ENCODE measurements at regions of chr10 and their contacts with region 1.

Region 1: GRCh38 chr10:16828114-16828568 is 10.9 kb upstream of the RSU1 start:
- DNase-seq: peak; percentile 80
- ATAC-seq: peak; percentile 88
- H3K4me3 Mint-ChIP-seq: no peak overlapping the region
- H3K27ac Mint-ChIP-seq: no peak overlapping the region
- H3K4me1 Mint-ChIP-seq: peaks cover 9% of the 10 kb centered on the region
- H3K27me3 Mint-ChIP-seq: no peaks in the 10 kb centered on the region

Region 2: DNA sequence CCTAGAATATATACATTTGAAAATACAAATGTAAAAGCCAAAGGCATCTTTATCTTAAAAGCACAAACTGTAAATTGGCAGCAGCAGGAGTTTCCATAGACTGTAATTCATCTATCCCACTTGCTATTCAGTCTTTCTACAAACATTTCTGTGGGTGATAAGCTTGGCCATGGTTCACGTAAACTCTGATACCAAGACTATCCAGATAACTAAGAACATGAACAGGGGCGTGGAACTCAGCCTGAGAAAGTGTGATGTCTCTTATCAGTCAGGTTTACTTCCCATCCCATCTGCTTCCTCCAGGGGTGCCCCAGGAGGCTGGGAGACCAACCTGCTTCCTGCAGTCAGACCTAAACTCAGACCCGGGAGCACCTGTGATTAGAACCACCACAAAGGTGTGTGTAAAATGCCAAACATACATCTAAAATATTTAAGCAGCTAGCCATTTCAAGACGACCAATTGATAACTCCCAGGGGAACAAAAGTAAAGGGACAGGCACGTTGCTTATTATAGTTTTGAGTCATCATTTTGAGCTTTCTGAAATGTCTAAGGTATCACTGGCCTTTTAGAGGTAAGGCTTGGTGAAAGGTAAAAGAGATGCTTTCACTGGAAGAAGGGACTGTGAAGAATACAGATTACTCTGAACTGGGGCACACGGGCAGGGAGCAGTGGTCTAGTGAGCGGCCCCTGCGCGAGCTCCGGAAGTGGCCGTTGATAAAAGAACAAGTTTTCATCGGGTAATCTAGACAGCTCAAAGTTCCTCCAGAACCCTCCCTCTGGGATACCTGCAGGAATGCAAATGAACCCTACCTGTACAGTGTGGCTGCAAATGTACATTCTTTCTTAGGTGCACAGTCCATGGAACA is 62.4 kb before region 1 on chr10:
- CTCF ChIA-PET with region 1: no interaction called
- POLR2A ChIA-PET with region 1: no interaction called
- DNase-seq: no peak
- ATAC-seq: no peak
- H3K4me3 Mint-ChIP-seq: no peak overlapping the region
- H3K27ac Mint-ChIP-seq: no peak overlapping the region
- H3K4me1 Mint-ChIP-seq: no peaks in the 10 kb centered on the region
- H3K27me3 Mint-ChIP-seq: no peaks in the 10 kb centered on the region

Region 3: DNA sequence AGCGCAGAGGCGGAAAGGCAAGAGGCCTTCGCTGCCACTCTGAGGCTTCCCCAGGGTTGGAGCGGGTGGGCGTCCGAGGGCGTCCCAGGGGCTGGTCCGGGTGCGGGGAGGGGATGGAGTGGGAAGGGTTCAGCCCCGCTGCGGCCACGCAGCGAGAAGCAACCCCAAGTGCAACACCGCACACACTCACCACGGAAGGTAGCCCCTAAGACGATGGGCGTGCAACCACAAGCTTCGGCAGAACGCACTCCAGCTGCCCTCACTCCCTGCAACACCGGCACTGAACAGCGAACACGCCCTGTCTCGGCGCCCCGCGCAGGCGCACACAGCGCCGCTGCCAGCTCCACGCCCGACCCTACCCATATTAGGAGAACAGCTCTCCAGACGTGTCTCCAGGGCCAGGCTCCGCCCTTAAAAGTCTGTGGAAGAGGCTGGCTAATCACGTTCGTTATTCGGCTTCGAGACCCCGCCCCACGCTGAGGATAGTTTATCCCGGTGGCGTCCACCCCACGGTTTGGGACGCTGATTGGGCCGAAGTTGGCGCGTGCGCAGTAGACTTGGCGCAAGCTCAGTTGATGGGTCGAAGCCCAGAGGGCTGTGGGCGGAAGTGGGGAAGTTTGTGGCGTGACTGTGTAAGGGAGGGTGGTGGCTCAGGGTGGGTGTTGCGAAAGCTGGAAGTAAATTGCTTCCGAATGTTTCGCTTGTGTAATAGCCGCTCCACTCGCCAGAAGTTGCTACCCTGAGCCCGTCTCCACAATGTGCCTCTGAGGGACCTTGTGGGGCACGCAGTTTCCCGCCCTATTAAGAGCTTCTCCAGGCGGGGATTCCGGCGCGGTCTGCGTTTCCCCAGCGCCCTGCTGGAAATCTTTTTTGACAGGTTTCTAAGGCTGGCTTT is 10.8 kb before region 1 on chr10 and contains the start of gene RSU1:
- CTCF ChIA-PET with region 1: interaction called, 16 read pairs
- POLR2A ChIA-PET with region 1: interaction called, 4 read pairs
- DNase-seq: peak; percentile 100
- ATAC-seq: peak; percentile 98
- H3K4me3 Mint-ChIP-seq: peak within 1 kb of the TSS; percentile 89
- H3K27ac Mint-ChIP-seq: peak within 1 kb of the TSS; percentile 95
- H3K4me1 Mint-ChIP-seq: peaks cover 27% of the 10 kb centered on the region
- H3K27me3 Mint-ChIP-seq: peaks cover 9% of the 10 kb centered on the region
- total RNA-seq, gene RSU1: 71.9 to 74.1 TPM

Region 4: DNA sequence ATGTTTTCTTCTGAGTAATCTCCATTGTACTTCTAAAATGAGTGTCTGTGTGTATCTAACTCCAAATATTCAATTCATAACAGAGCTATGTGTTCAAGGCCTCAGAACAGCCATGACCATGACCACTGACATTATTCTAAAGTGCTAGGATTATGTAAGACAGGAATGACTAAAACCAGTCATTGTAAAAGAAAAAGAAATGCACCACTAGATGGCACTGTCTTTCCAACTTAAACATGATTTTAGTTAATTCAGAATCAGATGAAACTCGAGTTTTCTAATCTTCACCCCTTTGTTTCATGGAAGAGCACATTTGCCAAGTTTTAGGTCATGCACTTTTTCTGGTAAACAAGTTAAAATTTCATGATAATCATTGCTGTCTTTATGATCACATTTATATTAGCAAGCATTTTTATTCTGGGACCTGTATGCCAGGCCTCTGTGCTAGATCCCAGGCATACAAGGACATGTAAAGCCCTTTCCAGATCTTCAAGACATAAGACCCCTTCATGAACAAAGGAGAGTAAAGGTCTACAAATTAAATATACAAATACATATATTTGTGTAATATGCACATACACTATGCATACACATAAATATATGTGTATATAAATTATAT is 15.2 kb after region 1 on chr10:
- CTCF ChIA-PET with region 1: interaction called, 19 read pairs
- POLR2A ChIA-PET with region 1: no interaction called
- DNase-seq: no peak
- ATAC-seq: peak; percentile 71
- H3K4me3 Mint-ChIP-seq: no peak overlapping the region
- H3K27ac Mint-ChIP-seq: no peak overlapping the region
- H3K4me1 Mint-ChIP-seq: no peaks in the 10 kb centered on the region
- H3K27me3 Mint-ChIP-seq: peaks cover 4% of the 10 kb centered on the region

Region 5: GRCh38 chr10:17257466-17258321 is 429.6 kb after region 1 on chr10:
- CTCF ChIA-PET with region 1: interaction called, 19 read pairs
- POLR2A ChIA-PET with region 1: no interaction called
- DNase-seq: peak; percentile 77
- ATAC-seq: peak; percentile 85
- H3K4me3 Mint-ChIP-seq: peak overlapping the region; percentile 32
- H3K27ac Mint-ChIP-seq: no peak overlapping the region
- H3K4me1 Mint-ChIP-seq: peaks cover 12% of the 10 kb centered on the region
- H3K27me3 Mint-ChIP-seq: no peaks in the 10 kb centered on the region

Measured in activated CD8-positive, alpha-beta T cell treated with anti-CD3 and anti-CD28 coated beads, Interleukin-2, amount 10 ng/mL, durations not matched to agents 7 days and 5 days (primary cell).